MCF 10A (cell line): ENCODE measurements at regions of chr19 and their contacts with region 1.

Region 1: DNA sequence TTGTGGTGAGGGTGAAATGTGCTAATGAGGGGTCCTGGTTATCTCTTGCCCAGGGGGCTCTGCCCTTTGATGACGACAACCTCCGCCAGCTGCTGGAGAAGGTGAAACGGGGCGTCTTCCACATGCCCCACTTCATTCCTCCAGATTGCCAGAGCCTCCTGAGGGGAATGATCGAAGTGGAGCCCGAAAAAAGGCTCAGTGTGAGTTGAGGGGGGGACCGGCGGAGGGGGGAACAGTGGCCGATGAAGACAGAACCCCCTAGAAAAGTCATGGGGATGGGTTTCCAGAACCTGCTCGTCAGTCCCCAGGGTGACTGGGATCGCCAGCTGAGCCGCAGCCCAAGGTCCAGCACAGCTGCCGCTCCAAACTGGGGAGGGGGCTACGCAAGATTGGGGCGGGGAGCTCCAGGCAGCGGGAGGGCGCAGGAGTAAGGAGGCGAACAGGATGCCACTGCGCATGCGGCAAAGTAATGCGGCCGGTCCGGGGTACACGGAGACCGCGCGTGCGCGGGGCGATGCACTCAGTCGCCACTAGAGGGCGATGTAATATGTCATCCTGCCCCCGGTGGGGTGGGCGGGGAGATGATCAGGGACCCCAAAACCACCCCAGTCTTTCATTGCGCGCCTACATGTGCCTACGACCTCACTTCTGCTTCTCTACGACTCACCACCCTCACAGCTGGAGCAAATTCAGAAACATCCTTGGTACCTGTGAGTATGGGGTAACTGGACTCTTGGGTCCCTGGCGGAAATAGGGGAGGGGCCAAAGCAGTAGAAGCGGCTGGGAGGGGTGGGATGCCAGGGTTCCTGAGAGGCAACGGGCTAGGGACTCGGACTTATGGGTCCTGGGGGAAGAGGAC is 17.9 kb downstream of the BRSK1 start:
- DNase-seq: peak; percentile 81
- H3K4me3 Mint-ChIP-seq: peak overlapping the region; percentile 58
- H3K27ac Mint-ChIP-seq: no peak overlapping the region
- H3K4me1 Mint-ChIP-seq: no peaks in the 10 kb centered on the region
- H3K27me3 Mint-ChIP-seq: no peaks in the 10 kb centered on the region
- CTCF ChIP-seq: peak; percentile 96

Region 2: DNA sequence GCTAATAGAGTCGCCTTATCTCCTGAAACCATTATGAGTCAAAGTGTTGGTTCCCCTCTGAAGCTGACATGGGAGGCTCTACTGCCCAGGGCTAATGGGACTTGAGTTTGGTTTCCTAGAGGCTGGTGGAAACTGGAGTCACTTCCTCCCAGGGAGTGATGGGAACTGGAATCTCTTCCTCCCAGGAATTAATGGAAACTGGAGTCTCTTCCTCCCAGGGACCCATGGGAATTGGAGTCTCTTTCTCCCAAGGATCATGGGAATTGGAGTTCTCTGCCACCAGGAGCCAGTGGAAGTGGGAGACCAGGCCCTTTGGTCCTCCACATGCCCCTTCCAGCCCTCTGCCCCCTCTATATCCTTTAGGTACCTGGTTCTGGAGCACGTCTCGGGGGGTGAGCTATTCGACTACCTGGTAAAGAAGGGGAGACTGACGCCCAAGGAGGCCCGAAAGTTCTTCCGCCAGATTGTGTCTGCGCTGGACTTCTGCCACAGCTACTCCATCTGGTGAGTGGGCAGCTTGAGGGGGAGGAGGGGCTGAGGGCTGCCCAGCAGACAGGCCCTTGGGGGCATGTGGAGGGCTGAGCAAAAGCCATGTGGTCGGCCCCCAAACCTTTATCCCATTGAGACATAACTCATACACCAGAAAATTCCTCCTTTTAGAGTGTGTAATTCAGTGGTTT is 12.4 kb before region 1 on chr19:
- CTCF ChIA-PET with region 1: interaction called, 50 read pairs
- POLR2A ChIA-PET with region 1: interaction called, 11 read pairs
- intact Hi-C with region 1: no loop called
- DNase-seq: no peak
- H3K4me3 Mint-ChIP-seq: no peak overlapping the region
- H3K27ac Mint-ChIP-seq: no peak overlapping the region
- H3K4me1 Mint-ChIP-seq: peaks cover 5% of the 10 kb centered on the region
- H3K27me3 Mint-ChIP-seq: no peaks in the 10 kb centered on the region
- CTCF ChIP-seq: no peak

Region 3: GRCh38 chr19:55319785-55320184 is 18.1 kb after region 1 on chr19:
- CTCF ChIA-PET with region 1: interaction called, 58 read pairs
- POLR2A ChIA-PET with region 1: interaction called, 3 read pairs
- intact Hi-C with region 1: no loop called
- DNase-seq: no peak
- H3K4me3 Mint-ChIP-seq: no peak overlapping the region
- H3K27ac Mint-ChIP-seq: no peak overlapping the region
- H3K4me1 Mint-ChIP-seq: peaks cover 6% of the 10 kb centered on the region
- H3K27me3 Mint-ChIP-seq: peaks cover 27% of the 10 kb centered on the region
- CTCF ChIP-seq: no peak

Region 4: DNA sequence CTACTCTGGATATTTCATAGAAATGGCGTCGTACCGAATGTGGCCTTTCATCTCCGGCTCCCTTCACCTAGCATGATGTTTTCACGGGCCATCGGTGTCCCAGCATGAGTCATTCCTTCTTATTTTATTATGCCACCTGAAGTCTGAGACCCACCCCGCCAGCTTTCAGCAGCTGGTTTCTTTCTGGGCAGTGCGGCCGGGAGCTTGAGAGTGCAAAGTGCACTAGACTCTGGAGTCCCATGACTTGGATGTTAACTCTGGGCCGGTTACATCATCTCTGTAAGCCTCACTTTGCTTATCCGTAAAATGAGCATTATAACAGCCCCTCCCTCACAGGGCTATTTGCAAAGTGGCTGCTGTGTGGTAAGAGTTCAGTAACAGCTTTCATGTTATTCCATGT is 32.2 kb after region 1 on chr19:
- CTCF ChIA-PET with region 1: interaction called, 38 read pairs
- POLR2A ChIA-PET with region 1: interaction called, 23 read pairs
- intact Hi-C with region 1: loop called (anchors 2 kb)
- DNase-seq: no peak
- H3K4me3 Mint-ChIP-seq: no peak overlapping the region
- H3K27ac Mint-ChIP-seq: no peak overlapping the region
- H3K4me1 Mint-ChIP-seq: peaks cover 22% of the 10 kb centered on the region
- H3K27me3 Mint-ChIP-seq: no peaks in the 10 kb centered on the region
- CTCF ChIP-seq: no peak